ENCODE measurements at regions of chr12 and their contacts with region 1.

Region 1: DNA sequence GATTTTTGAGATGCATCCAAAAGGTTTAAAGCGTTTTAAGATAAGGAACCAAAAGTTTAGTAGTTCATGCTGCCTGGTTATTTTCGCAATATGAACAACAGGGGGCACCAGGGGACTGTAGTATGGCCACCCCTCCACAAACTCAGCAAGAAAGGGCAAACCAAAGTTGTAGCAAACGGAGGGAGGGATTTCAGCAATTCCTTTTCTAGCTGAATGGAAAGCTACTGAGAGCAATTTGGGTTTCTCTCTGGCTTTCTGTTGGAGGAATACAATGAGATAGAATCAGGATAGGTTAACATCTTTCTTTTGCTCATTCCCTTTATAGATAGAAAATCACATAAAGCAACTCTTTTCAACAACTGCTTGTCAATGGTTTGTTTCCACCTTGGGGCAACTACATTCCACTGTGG is 62.5 kb downstream of the DRAM1 start:
- DNase-seq: peak; percentile 39 to 40
- H3K4me3 ChIP-seq: no peak overlapping the region
- H3K27ac ChIP-seq: no peak overlapping the region
- H3K4me1 ChIP-seq: no peaks in the 10 kb centered on the region
- H3K27me3 ChIP-seq: no peaks in the 10 kb centered on the region
- CTCF ChIP-seq: peak; percentile 86

Region 2: GRCh38 chr12:101407436-101408345 is 532.2 kb before region 1 on chr12 and contains the start of gene ARL1:
- CTCF ChIA-PET with region 1: no interaction called
- POLR2A ChIA-PET with region 1: no interaction called
- intact Hi-C with region 1: loop called (anchors 5 kb)
- DNase-seq: peak; percentile 72 to 81
- H3K4me3 ChIP-seq: peak within 1 kb of the TSS; percentile 100
- H3K27ac ChIP-seq: peak within 1 kb of the TSS; percentile 95
- H3K4me1 ChIP-seq: peaks cover 26% of the 10 kb centered on the region
- H3K27me3 ChIP-seq: no peaks in the 10 kb centered on the region
- CTCF ChIP-seq: no peak
- total RNA-seq, gene ARL1: 60.6 and 71.9 TPM in 2 replicates

Region 3: DNA sequence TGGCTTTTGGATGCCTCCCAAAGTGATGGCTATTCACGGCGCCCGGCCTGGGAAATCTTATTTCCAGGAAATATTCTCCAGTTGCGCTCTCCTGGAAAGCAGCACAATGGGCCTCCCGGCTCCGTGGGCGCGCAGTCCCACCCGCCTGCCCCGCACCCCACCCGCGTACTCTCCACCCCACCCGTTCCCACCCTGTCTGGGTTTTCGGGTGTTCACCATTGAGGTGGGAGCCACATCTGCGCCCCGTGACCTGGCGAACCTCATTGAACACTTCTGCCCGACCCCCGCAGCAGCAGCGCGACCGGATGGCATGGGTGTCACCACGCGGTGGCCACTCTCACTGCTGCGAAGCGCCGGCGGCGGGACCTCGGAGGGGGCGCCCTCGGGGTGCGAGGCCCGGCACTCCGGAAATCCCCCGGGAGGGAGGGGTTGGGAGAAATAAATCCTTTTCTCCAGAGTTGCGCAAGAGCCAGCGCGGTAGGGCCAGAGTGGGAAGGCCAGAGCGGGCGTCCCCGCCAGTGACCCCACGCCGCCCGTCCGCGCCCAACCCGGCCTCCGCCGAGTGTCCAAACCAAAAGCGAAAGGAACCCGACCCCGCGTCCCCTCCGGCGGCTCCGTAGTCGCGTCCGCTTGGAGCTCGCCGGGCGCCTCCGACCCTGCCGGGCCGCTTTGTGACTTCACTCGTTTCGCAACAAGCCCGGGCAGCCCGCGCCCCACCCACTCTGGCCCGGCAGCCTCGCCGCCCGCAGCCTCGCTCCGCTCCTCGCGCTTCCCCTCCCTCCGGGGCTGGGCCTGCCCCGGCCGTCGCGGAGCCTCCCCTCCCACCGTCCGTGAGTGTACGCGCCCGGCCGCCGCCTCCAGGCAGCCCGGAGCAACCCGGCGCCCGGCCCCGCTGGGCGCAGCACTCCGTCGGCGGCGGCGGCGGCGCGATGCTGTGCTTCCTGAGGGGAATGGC is 62.7 kb before region 1 on chr12 and contains the start of gene DRAM1:
- CTCF ChIA-PET with region 1: no interaction called
- POLR2A ChIA-PET with region 1: no interaction called
- intact Hi-C with region 1: loop called (anchors 5 kb)
- DNase-seq: peak; percentile 67 to 90
- H3K4me3 ChIP-seq: peak within 1 kb of the TSS; percentile 79
- H3K27ac ChIP-seq: peak within 1 kb of the TSS; percentile 72
- H3K4me1 ChIP-seq: peaks cover 6% of the 10 kb centered on the region; the same call in 1 of the 2 replicates
- H3K27me3 ChIP-seq: no peaks in the 10 kb centered on the region
- CTCF ChIP-seq: no peak
- total RNA-seq, gene DRAM1: 6.0 and 6.2 TPM in 2 replicates

Region 4: GRCh38 chr12:102740141-102740955 is 800.5 kb after region 1 on chr12:
- CTCF ChIA-PET with region 1: no interaction called
- POLR2A ChIA-PET with region 1: no interaction called
- intact Hi-C with region 1: loop called (anchors 1 kb)
- DNase-seq: no peak
- H3K4me3 ChIP-seq: no peak overlapping the region
- H3K27ac ChIP-seq: no peak overlapping the region
- H3K4me1 ChIP-seq: no peaks in the 10 kb centered on the region
- H3K27me3 ChIP-seq: no peaks in the 10 kb centered on the region
- CTCF ChIP-seq: peak; percentile 62

Region 5: GRCh38 chr12:102811110-102811737 is 871.4 kb after region 1 on chr12:
- CTCF ChIA-PET with region 1: no interaction called
- POLR2A ChIA-PET with region 1: no interaction called
- intact Hi-C with region 1: loop called (anchors 2 kb)
- DNase-seq: peak in 1 of 2 experiments; percentile 33
- H3K4me3 ChIP-seq: no peak overlapping the region
- H3K27ac ChIP-seq: no peak overlapping the region
- H3K4me1 ChIP-seq: no peaks in the 10 kb centered on the region
- H3K27me3 ChIP-seq: no peaks in the 10 kb centered on the region
- CTCF ChIP-seq: peak; percentile 66